Esophagus muscularis mucosa (tissue), 4 donors: ENCODE measurements at regions of chr5 and their contacts with region 1.

Region 1: GRCh38 chr5:103562453-103563157 is at the start of gene NUDT12:
- DNase-seq: peak; percentile 96
- H3K4me3 ChIP-seq: peak within 1 kb of the TSS; percentile 63 to 82 (median 81)
- H3K27ac ChIP-seq: peak within 1 kb of the TSS; percentile 84 to 90 (median 88)
- H3K4me1 ChIP-seq: peaks cover 0 to 14% (median 10%) of the 10 kb centered on the region in 4 donors
- H3K27me3 ChIP-seq: peaks cover 0 to 4% (median 0%) of the 10 kb centered on the region in 4 donors
- CTCF ChIP-seq: no peak
- EP300 ChIP-seq: no peak
- POLR2A ChIP-seq: no peak
- total RNA-seq, gene NUDT12: 7.0 to 18.3 (median 10.9) TPM

Region 2: DNA sequence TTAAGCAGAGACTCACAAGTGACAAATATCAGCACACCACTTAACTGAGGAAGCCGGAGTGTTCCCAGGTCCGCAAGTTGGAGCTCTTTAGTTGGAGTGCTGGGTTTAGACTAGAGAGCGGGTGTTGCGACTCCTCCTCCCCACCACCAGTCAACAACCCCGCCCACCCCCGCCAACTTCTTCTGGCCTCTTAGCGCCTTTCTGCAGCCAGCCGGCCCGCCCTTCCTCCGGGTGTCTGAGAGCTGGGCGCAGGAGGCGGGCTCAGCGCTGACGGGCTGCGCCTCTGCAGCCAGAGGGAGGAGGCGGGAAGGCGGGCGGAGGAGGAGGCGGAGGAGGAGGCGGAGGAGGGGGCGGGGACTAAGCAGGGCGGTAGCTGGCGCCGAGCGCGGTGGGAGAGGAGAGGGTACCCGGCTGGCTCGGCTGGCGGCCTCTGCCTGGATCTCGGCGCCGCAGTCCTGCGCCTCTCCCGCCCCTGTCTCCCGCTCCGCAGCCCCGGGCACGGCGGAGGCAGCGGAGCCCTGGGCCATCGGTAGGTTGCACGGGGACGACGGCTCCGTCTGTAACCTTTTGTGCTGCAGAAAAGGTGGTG is 304.1 kb before region 1 on chr5 and contains the start of gene MACIR:
- intact Hi-C with region 1: loop called (anchors 2 kb)
- DNase-seq: peak; percentile 99
- H3K4me3 ChIP-seq: peak within 1 kb of the TSS; percentile 65 to 93 (median 80)
- H3K27ac ChIP-seq: peak within 1 kb of the TSS; percentile 82 to 89 (median 86)
- H3K4me1 ChIP-seq: peaks cover 21 to 43% (median 37%) of the 10 kb centered on the region in 4 donors
- H3K27me3 ChIP-seq: no peaks in the 10 kb centered on the region
- CTCF ChIP-seq: peak in 2 of 3 experiments; percentile 7 to 19
- EP300 ChIP-seq: no peak
- POLR2A ChIP-seq: no peak
- total RNA-seq, gene MACIR: 8.4 to 10.4 (median 9.5) TPM

Region 3: DNA sequence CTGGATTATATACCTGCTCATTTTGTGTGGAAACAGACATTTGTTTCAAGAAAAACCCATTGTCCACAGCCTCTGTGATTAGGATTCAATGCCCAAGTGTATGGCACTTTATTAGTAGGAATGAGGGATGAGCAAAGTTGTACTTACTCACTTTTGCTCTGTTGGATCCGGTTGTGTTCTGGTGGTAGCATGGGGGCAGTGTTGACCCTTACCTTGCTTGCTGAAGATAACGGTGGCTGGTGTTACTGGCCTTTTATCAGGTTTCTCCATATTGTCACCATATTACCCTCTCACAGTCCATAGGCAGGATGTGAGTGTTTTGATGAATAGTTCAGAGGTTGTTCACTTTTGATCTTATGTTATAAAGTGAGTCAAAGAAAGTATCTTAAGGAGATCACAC is 42.7 kb after region 1 on chr5:
- intact Hi-C with region 1: no loop called
- DNase-seq: no peak
- H3K4me3 ChIP-seq: no peak overlapping the region
- H3K27ac ChIP-seq: no peak overlapping the region
- H3K4me1 ChIP-seq: no peaks in the 10 kb centered on the region
- H3K27me3 ChIP-seq: no peaks in the 10 kb centered on the region
- CTCF ChIP-seq: no peak
- EP300 ChIP-seq: no peak
- POLR2A ChIP-seq: no peak